Panc1 (cell line): ENCODE measurements at regions of chr11 and their contacts with region 1.

Region 1: DNA sequence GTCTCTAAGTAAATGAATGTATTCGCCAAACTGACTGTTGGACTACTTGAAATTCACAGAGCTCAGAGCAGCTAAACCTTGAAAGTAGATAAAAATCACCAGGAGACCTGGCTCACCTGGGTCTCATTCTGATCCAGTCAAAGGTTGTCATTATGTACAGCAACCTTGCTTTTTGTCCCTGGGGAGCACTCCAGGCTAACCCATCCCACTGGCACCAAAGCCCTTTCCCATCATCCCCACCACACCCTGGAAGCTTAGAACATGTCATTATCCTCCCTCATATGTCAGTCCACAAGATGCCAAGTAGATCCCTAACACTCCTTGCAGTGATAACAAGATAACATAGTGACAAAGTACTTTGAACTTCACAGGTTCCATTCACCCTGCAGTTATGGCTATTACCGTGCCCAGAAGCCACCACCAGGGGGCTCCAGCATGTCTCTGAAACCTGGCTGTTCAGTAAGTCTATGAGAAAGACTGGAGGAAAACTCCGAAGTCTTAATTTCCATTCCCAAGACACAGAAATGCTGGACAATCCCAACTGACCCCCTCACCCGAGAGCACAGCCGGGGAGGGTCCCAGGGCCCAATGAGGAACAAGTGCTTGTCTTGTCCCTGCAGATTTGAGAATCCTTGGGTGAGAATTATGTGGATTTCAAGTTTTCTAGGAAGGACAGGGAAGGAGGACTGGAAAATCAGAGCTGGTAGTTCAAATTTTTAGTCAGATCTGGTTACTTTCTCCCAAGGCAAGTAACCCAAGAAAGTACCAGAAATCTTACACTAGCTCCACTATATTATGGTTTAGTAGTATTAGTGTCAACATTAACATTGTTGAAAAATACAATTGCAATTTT is 43.0 kb upstream of the USP47 start:
- DNase-seq: no peak
- ATAC-seq: peak; percentile 99
- H3K4me3 ChIP-seq: no peak overlapping the region
- H3K27ac ChIP-seq: 0 out of 2 replicates have a peak overlapping the region, but pooled peaks have one; percentile 55
- H3K4me1 ChIP-seq: no peaks in the 10 kb centered on the region; the same call in 1 of the 2 replicates
- H3K27me3 ChIP-seq: peaks cover 4% of the 10 kb centered on the region; the same call in 1 of the 2 replicates
- CTCF ChIP-seq: peak; percentile 93

Region 2: GRCh38 chr11:11672789-11673188 is 126.0 kb before region 1 on chr11:
- CTCF ChIA-PET with region 1: no interaction called
- POLR2A ChIA-PET with region 1: no interaction called
- in situ Hi-C with region 1: no loop called
- intact Hi-C with region 1: no loop called
- DNase-seq: no peak
- ATAC-seq: no peak
- H3K4me3 ChIP-seq: no peak overlapping the region
- H3K27ac ChIP-seq: no peak overlapping the region
- H3K4me1 ChIP-seq: no peaks in the 10 kb centered on the region
- H3K27me3 ChIP-seq: peaks cover 19% of the 10 kb centered on the region
- CTCF ChIP-seq: no peak

Region 3: DNA sequence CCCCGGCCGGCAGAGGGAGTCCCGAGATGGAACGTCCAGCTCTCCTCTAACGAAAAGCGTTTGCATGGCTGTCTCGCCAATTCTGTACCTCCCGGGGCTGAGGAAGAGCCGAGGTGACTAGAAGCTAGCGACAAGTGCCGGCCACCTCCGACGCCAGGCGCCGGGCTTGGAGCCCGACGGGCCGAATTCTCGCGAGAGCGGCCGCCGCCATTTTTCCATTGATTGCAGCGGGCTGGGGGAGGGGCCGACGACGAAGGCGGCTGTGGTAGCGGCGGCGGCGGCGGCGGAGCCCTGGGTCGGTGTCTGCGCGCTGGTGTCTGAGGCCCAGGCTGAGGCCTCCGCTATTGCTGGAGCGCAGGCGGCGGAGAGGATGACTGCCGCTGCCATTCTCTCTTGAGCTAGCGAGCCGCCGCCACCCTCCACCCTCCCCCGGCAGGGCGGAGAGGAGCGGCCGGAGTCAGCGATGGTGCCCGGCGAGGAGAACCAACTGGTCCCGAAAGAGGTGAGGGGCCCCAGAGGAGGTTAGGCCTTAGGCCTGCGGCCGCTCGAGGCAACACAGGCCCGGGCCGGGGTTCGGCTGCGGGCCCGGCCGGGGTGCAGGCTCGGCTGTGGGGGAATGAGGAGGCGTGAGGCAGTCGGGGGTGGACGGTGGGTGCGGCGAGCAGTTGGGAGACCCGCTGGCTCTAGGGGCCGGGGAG is 43.1 kb after region 1 on chr11 and contains the start of gene USP47:
- CTCF ChIA-PET with region 1: no interaction called
- POLR2A ChIA-PET with region 1: no interaction called
- in situ Hi-C with region 1: no loop called
- intact Hi-C with region 1: loop called (anchors 5 kb)
- DNase-seq: no peak
- ATAC-seq: peak; percentile 86
- H3K4me3 ChIP-seq: peak within 1 kb of the TSS; percentile 82 to 84
- H3K27ac ChIP-seq: peak within 1 kb of the TSS; percentile 94
- H3K4me1 ChIP-seq: peaks cover 32% of the 10 kb centered on the region
- H3K27me3 ChIP-seq: no peaks in the 10 kb centered on the region
- CTCF ChIP-seq: peak; percentile 65; the same call in 1 of the 2 replicates
- total RNA-seq, gene USP47: 39.2 TPM

Region 4: DNA sequence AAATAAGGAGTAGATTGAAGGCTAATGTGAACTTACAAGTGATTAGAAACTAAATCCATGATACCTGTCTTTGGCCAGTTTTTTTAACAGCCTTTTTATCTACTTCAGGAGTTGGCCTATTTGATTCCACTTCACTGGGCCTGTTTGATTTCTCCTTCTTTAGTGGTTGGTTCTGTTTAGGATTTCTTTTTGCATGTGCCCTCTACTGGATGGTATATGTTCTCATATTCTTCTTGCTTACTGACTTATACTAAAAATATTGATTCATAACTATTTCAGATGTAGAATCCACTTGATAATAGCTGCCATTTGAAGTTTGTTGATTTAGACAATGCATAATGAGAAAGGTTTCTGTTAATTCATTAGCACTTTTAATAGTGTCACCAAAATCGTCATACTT is 96.9 kb after region 1 on chr11:
- CTCF ChIA-PET with region 1: no interaction called
- POLR2A ChIA-PET with region 1: no interaction called
- in situ Hi-C with region 1: no loop called
- intact Hi-C with region 1: loop called (anchors 10 kb)
- DNase-seq: no peak
- ATAC-seq: no peak
- H3K4me3 ChIP-seq: no peak overlapping the region
- H3K27ac ChIP-seq: no peak overlapping the region
- H3K4me1 ChIP-seq: no peaks in the 10 kb centered on the region; the same call in 1 of the 2 replicates
- H3K27me3 ChIP-seq: no peaks in the 10 kb centered on the region
- CTCF ChIP-seq: peak; percentile 26; the same call in 1 of the 2 replicates

Region 5: DNA sequence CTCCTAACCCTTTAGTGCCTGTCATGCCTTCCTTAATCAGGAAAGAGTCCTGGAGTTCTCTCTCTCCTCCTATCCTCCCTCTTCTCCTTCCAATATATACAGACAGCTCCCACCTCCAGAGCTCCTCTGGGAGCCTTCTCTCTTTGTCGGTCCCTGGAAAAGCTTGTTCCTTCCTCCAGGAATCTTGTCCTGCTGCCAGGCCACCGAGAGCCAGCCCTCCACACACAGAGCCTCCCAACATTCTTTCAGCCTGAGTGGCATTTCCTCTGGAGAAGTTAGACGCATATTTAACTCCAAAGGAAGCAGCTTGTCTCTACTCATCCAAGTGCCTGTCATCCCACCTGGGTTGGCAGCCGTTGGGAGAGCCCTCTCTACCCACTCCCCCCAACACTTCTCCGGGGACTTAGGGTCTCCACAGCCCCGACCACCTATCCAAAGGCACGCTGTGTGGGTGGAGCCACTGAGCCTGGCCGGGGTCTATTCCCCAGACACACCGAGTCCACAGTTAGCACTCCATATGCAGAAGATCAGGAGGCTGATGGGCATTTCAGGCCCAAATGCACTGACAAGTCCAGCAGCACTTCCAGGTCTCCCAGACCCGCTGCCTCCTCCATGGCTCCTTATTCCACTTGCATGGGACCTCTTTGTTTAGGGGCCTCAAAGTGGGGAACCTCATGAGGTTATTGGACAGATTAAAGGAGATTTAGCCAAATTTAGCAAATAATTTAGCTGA is 178.6 kb after region 1 on chr11:
- CTCF ChIA-PET with region 1: no interaction called
- POLR2A ChIA-PET with region 1: no interaction called
- in situ Hi-C with region 1: no loop called
- intact Hi-C with region 1: no loop called
- DNase-seq: peak; percentile 75
- ATAC-seq: peak; percentile 86
- H3K4me3 ChIP-seq: peak overlapping the region in 1 of 2 experiments; percentile 5; a peak in 1 of 4 replicates
- H3K27ac ChIP-seq: peak overlapping the region; percentile 95
- H3K4me1 ChIP-seq: peaks cover 51% of the 10 kb centered on the region
- H3K27me3 ChIP-seq: no peaks in the 10 kb centered on the region
- CTCF ChIP-seq: no peak

Region 6: GRCh38 chr11:12281571-12282478 is 483.0 kb after region 1 on chr11:
- CTCF ChIA-PET with region 1: no interaction called
- POLR2A ChIA-PET with region 1: interaction called, 3 read pairs
- in situ Hi-C with region 1: no loop called
- intact Hi-C with region 1: loop called (anchors 5 kb)
- DNase-seq: peak; percentile 67
- ATAC-seq: peak; percentile 78
- H3K4me3 ChIP-seq: no peak overlapping the region
- H3K27ac ChIP-seq: peak overlapping the region; percentile 56
- H3K4me1 ChIP-seq: peaks cover 25% of the 10 kb centered on the region
- H3K27me3 ChIP-seq: no peaks in the 10 kb centered on the region
- CTCF ChIP-seq: peak; percentile 94